ENCODE measurements at regions of chr3 and their contacts with region 1.

Region 1: DNA sequence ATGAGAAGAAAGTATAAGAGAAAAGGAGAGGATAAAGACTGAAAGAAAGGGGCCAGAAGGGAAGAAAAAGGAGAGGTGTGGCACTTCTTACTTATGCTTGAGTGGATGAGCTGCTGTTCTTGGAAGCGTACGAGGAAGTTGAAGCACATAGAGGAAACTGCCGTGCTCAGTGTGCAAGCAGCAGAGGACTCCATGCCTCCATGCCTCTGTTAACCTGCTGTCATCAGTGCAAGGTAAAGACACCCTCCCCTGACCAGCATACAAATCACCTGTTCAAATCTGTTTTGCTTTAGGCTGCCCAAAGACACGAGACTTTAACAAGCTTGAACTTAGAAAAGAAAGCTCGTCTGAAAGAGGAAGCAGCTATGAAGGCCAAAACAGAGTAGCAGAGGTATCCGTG is 6.4 kb downstream of the WDR5B start:
- DNase-seq: no peak
- H3K4me3 Mint-ChIP-seq: no peak overlapping the region
- H3K27ac Mint-ChIP-seq: no peak overlapping the region
- H3K4me1 Mint-ChIP-seq: peaks cover 28% of the 10 kb centered on the region
- H3K27me3 Mint-ChIP-seq: no peaks in the 10 kb centered on the region

Region 2: GRCh38 chr3:122392868-122393844 is 16.3 kb before region 1 on chr3:
- CTCF ChIA-PET with region 1: interaction called, 13 read pairs
- POLR2A ChIA-PET with region 1: no interaction called
- DNase-seq: peak; percentile 23
- H3K4me3 Mint-ChIP-seq: no peak overlapping the region
- H3K27ac Mint-ChIP-seq: no peak overlapping the region
- H3K4me1 Mint-ChIP-seq: peaks cover 25% of the 10 kb centered on the region
- H3K27me3 Mint-ChIP-seq: no peaks in the 10 kb centered on the region

Region 3: DNA sequence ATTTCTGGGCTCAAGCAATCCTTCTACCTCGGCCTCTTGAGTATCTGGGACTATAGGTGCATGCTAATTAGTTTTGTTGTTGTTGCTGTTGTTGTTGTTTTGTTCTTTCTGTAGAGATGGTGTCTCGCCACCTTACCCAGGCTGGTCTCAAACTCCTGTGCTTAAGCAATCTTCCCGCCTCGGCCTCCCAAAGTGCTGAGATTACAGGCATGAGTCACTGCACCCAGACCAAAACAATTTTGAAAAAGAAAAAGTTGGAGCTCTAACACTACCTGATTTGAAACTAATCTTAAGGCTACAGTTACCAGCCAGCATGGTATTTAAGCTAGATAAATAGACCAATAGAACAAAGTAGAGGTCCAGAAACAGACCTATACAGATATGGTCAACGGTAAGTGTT is 75.5 kb after region 1 on chr3:
- CTCF ChIA-PET with region 1: no interaction called
- POLR2A ChIA-PET with region 1: no interaction called
- DNase-seq: no peak
- H3K4me3 Mint-ChIP-seq: no peak overlapping the region
- H3K27ac Mint-ChIP-seq: no peak overlapping the region
- H3K4me1 Mint-ChIP-seq: peaks cover 20% of the 10 kb centered on the region
- H3K27me3 Mint-ChIP-seq: no peaks in the 10 kb centered on the region

Measured in activated CD4-positive, alpha-beta memory T cell treated with anti-CD3 and anti-CD28 coated beads, Interleukin-2, amount 10 ng/mL, durations not matched to agents 7 days and 5 days (primary cell).